Activated T-helper 1 cell treated with anti-CD3 and anti-CD28 coated beads, Interleukin-12 subunit alpha, Interleukin-12 subunit beta, Interleukin-2, Interleukin-4 antibody, amounts not matched to agents 30 ng/mL and 10 ng/mL and 1 ng/mL, durations not matched to agents 14 hours and 24 hours and 36 hours (primary cell): ENCODE measurements at regions of chrX and their contacts with region 1.

Region 1: GRCh38 chrX:101407748-101408531 is at the starts of genes GLA and HNRNPH2:
- DNase-seq: peak; percentile 82
- H3K4me3 Mint-ChIP-seq: peak within 1 kb of the TSS; percentile 99
- H3K27ac Mint-ChIP-seq: peak within 1 kb of the TSS; percentile 98
- H3K4me1 Mint-ChIP-seq: peaks cover 35% of the 10 kb centered on the region
- H3K27me3 Mint-ChIP-seq: no peaks in the 10 kb centered on the region
- total RNA-seq, gene GLA: 65.7 and 67.9 TPM in 2 replicates
- total RNA-seq, gene HNRNPH2: 20.6 and 21.3 TPM in 2 replicates

Region 2: GRCh38 chrX:100819837-100820666 is 587.9 kb before region 1 on chrX and contains the start of gene CSTF2:
- intact Hi-C with region 1: loop called (anchors 5 kb)
- DNase-seq: peak; percentile 74
- H3K4me3 Mint-ChIP-seq: peak within 1 kb of the TSS; percentile 84
- H3K27ac Mint-ChIP-seq: peak within 1 kb of the TSS; percentile 95
- H3K4me1 Mint-ChIP-seq: peaks cover 7% of the 10 kb centered on the region
- H3K27me3 Mint-ChIP-seq: peaks cover 3% of the 10 kb centered on the region
- total RNA-seq, gene CSTF2: 70.3 and 72.1 TPM in 2 replicates

Region 3: DNA sequence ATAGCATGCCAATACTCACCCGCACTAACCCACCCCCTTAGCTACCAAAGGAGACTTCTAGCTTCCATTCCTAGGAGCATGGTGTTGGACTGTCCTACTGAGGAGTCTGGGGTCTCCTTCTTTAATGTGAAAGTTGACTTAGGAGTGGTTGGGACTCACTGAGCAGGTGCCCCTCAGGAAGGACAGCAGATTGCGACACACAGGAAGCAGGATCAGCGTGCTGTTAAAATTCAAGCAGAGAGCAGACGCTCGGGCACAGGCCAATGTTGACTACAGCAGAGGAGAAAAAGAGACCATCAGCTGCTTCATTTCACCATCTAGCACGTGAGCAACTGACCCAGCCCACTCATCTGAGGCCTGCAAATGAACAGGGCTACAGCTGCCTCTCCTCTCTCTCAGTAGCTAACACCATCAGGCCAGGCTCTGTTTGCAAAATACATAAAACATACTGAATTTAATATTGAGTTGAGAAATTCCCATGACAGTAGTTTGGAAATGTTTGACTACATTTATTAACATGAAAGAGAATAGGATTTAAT is 544.5 kb before region 1 on chrX:
- intact Hi-C with region 1: no loop called
- DNase-seq: no peak
- H3K4me3 Mint-ChIP-seq: no peak overlapping the region
- H3K27ac Mint-ChIP-seq: no peak overlapping the region
- H3K4me1 Mint-ChIP-seq: no peaks in the 10 kb centered on the region
- H3K27me3 Mint-ChIP-seq: peaks cover 6% of the 10 kb centered on the region

Region 4: GRCh38 chrX:101051549-101052302 is 356.2 kb before region 1 on chrX and contains the start of gene TRMT2B:
- intact Hi-C with region 1: loop called (anchors 5 kb)
- DNase-seq: peak; percentile 72
- H3K4me3 Mint-ChIP-seq: peak within 1 kb of the TSS; percentile 88
- H3K27ac Mint-ChIP-seq: peak within 1 kb of the TSS; percentile 93
- H3K4me1 Mint-ChIP-seq: peaks cover 17% of the 10 kb centered on the region
- H3K27me3 Mint-ChIP-seq: no peaks in the 10 kb centered on the region
- total RNA-seq, gene TRMT2B: 17.2 and 19.3 TPM in 2 replicates

Region 5: DNA sequence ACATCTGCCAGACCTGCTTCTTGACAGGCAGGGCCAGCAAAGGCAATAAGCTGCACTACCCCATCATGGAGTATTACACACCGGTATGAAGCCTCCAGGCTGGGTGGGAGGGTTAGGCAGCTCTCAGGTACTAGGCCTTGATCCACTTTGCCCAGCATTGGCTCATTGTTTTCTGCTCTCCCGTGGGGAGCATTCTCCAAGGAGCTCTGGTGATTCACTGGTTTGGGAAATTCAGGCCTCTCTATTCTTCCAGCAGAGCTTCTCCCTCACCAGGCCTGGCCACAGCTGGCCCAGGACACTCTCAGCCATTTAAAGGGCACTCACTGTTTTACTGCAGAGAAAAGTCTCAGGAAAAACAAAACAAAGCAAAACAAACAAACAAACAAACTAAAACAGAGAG is 155.3 kb before region 1 on chrX:
- intact Hi-C with region 1: no loop called
- DNase-seq: no peak
- H3K4me3 Mint-ChIP-seq: no peak overlapping the region
- H3K27ac Mint-ChIP-seq: no peak overlapping the region
- H3K4me1 Mint-ChIP-seq: peaks cover 3% of the 10 kb centered on the region
- H3K27me3 Mint-ChIP-seq: no peaks in the 10 kb centered on the region

Region 6: DNA sequence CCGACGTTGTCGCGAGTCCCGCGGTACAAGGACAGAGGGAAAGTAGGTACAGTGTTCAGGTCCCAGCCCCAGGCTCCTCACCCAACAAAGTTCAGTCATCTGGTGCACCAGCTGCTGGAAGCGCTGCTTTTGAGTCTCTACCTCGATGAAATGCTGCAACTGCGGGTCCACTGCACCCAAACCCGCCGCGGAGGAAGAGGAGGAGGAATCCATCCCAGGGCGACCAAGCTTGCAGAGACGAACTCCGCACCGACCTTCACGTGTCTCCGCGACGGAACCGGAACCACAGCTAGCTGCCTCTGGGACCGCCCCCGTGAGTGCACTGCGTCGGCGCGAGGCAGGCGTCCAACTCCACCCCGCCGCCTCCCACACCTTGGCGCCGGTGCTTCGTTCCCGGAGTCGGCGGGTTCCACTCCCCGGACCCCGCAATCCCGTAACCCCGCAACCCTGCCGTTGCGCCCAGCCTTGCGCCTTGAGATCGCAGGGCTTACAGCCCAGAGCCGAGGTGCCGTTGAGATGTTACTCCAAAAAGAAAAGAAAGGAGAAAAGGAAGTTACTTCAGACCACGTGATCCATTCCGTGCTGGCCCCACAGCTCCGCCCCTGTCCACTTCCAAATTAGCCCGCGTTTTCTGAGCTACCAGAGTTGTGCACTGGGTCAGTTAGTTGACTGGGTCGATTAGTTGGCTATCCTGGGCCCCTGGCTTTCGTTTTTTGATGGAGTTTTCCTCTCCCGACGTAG is 59.3 kb before region 1 on chrX and contains the start of gene TIMM8A:
- intact Hi-C with region 1: loop called (anchors 1 kb)
- DNase-seq: peak; percentile 72
- H3K4me3 Mint-ChIP-seq: peak within 1 kb of the TSS; percentile 90
- H3K27ac Mint-ChIP-seq: peak within 1 kb of the TSS; percentile 80
- H3K4me1 Mint-ChIP-seq: peaks cover 5% of the 10 kb centered on the region
- H3K27me3 Mint-ChIP-seq: no peaks in the 10 kb centered on the region
- total RNA-seq, gene TIMM8A: 30.9 and 36.5 TPM in 2 replicates

Region 7: GRCh38 chrX:101430457-101431078 is 22.6 kb after region 1 on chrX:
- intact Hi-C with region 1: loop called (anchors 1 kb)
- DNase-seq: no peak
- H3K4me3 Mint-ChIP-seq: peak overlapping the region; percentile 56
- H3K27ac Mint-ChIP-seq: peak overlapping the region; percentile 76
- H3K4me1 Mint-ChIP-seq: peaks cover 13% of the 10 kb centered on the region
- H3K27me3 Mint-ChIP-seq: no peaks in the 10 kb centered on the region

Region 8: GRCh38 chrX:101595739-101596419 is 187.9 kb after region 1 on chrX:
- intact Hi-C with region 1: no loop called
- DNase-seq: peak; percentile 8
- H3K4me3 Mint-ChIP-seq: no peak overlapping the region
- H3K27ac Mint-ChIP-seq: no peak overlapping the region
- H3K4me1 Mint-ChIP-seq: no peaks in the 10 kb centered on the region
- H3K27me3 Mint-ChIP-seq: peaks cover 2% of the 10 kb centered on the region